PC-3 (cell line): ENCODE measurements at regions of chr16 and their contacts with region 1.

Region 1: GRCh38 chr16:81940781-81941560 is 70.3 kb downstream of the SDR42E1 start:
- DNase-seq: peak; percentile 63
- ATAC-seq: peak; percentile 78
- H3K4me3 ChIP-seq: no peak overlapping the region
- H3K27ac ChIP-seq: no peak overlapping the region
- H3K4me1 ChIP-seq: peaks cover 6% of the 10 kb centered on the region
- H3K27me3 ChIP-seq: no peaks in the 10 kb centered on the region
- CTCF ChIP-seq: peak; percentile 73

Region 2: GRCh38 chr16:81891736-81892357 is 49.1 kb before region 1 on chr16:
- CTCF ChIA-PET with region 1: no interaction called
- POLR2A ChIA-PET with region 1: no interaction called
- intact Hi-C with region 1: loop called (anchors 1 kb)
- DNase-seq: peak; percentile 63
- ATAC-seq: peak; percentile 94
- H3K4me3 ChIP-seq: no peak overlapping the region
- H3K27ac ChIP-seq: peak overlapping the region; percentile 62
- H3K4me1 ChIP-seq: peaks cover 13% of the 10 kb centered on the region
- H3K27me3 ChIP-seq: no peaks in the 10 kb centered on the region
- CTCF ChIP-seq: no peak

Region 3: GRCh38 chr16:82061861-82062525 is 121.0 kb after region 1 on chr16:
- CTCF ChIA-PET with region 1: no interaction called
- POLR2A ChIA-PET with region 1: no interaction called
- intact Hi-C with region 1: loop called (anchors 2 kb)
- DNase-seq: peak; percentile 37
- ATAC-seq: no peak
- H3K4me3 ChIP-seq: no peak overlapping the region
- H3K27ac ChIP-seq: no peak overlapping the region
- H3K4me1 ChIP-seq: peaks cover 15% of the 10 kb centered on the region
- H3K27me3 ChIP-seq: no peaks in the 10 kb centered on the region
- CTCF ChIP-seq: peak; percentile 69

Region 4: GRCh38 chr16:82111944-82112343 is 171.0 kb after region 1 on chr16:
- CTCF ChIA-PET with region 1: no interaction called
- POLR2A ChIA-PET with region 1: no interaction called
- intact Hi-C with region 1: no loop called
- DNase-seq: peak; percentile 44
- ATAC-seq: peak; percentile 37; the same call in 1 of the 2 replicates
- H3K4me3 ChIP-seq: no peak overlapping the region
- H3K27ac ChIP-seq: no peak overlapping the region
- H3K4me1 ChIP-seq: peaks cover 10% of the 10 kb centered on the region
- H3K27me3 ChIP-seq: no peaks in the 10 kb centered on the region
- CTCF ChIP-seq: no peak